ENCODE measurements at regions of chr7 and their contacts with region 1.

Region 1: DNA sequence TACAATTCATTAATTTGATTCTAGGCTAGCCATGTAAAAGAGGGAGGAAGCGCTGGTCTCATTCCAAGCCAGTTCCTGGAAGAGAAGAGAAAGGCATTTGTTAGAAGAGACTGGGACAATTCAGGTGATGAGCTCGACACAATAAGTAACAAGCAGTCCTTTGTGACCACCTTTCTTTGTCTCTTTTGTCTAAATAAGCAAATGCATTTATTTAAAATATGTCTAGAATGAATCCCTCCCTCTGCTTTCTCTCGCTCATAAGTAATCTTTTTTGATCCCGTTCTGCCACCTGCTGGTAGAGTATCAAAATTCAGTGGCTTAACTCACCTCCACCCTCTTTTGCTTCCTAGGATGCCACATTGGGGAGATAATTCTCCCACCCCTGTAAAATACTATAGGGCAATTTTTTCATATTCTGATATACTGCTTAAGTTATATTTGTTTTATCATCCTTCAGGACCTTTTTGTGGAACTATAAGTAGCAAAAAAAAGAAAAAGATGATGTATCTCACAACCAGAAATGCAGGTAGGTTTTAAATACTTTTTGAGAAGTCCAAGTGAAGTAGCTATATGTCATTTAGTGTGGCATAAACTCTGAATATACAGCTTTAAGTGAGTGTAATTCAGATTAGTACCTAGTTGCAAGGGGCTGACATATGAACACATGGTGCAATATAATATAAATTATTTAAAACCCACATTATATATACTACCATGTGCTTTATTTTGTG is 91.5 kb downstream of the GSDME start:
- DNase-seq: peak; percentile 71
- ATAC-seq: peak; percentile 45
- H3K4me3 ChIP-seq: no peak overlapping the region
- H3K27ac ChIP-seq: no peak overlapping the region
- H3K4me1 ChIP-seq: peaks cover 21% of the 10 kb centered on the region
- H3K27me3 ChIP-seq: no peaks in the 10 kb centered on the region
- CTCF ChIP-seq: peak; percentile 79

Region 2: DNA sequence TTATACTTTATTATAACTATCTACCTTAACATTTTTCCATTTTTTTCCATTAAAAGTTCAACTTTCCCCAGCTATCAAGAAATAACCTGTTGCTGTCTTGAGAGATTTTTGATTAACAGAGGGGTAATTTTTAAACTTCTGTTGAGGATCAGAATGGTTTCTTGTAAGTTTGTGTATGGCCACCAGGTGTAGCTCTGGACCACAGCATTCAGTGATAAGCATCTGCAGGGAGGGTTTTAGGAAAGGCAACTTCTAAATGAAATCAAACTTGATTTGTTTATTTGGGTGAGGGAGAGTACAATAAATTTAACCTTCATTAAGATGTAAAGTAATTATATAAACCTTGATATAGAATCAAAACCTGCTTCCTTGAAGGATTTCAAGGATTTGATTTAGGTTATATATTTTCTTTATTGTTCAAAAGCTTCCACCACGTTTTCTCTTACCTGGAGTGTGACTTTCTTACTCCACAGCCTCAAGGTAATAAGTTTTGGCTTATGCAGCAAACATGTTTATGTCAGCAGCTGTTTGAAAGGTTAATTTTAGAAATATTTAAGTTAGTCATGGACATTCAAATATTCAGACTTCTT is 802.4 kb before region 1 on chr7:
- CTCF ChIA-PET with region 1: no interaction called
- POLR2A ChIA-PET with region 1: no interaction called
- intact Hi-C with region 1: loop called (anchors 5 kb)
- DNase-seq: peak; percentile 63
- ATAC-seq: peak; percentile 74
- H3K4me3 ChIP-seq: no peak overlapping the region
- H3K27ac ChIP-seq: no peak overlapping the region
- H3K4me1 ChIP-seq: peaks cover 9% of the 10 kb centered on the region; the same call in 1 of the 2 replicates
- H3K27me3 ChIP-seq: no peaks in the 10 kb centered on the region
- CTCF ChIP-seq: peak; percentile 80

Region 3: DNA sequence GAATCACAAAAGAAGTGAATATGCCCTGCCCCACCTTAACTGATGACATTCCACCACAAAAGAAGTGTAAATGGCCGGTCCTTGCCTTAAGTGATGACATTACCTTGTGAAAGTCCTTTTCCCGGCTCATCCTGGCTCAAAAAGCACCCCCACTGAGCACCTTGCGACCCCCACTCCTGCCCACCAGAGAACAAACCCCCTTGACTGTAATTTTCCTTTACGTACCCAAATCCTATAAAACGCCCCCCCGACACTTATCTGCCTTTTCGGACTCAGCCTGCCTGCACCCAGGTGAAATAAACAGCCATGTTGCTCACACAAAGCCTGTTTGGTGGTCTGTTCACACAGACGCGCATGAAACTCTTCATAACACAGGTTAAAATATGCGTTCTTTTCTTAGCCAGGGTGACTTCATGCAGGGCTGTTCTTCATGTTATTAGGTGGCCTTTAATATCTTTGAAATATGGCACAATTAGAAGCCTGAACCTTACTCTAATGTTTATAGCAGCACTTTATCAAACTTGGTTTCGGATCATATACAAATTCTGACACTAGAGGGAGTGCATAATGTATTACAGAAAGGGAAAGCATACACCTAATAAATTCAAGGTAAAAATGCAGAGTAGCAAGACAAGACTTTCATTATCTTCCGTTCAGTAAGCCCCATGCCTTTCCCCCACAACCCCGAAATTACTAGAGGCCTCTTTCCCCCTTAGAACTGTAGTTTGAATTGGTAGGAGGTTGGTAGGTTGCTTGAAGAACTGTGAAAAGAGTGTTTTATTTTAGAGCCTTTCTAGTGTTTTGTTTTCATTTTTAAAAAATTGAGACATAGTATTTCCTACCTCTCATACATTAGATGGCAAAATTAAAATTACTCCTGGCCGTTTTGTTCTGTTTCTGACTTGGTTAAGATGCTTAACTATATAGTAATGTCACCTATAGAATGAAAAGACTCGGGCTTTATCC is 263.8 kb before region 1 on chr7:
- CTCF ChIA-PET with region 1: interaction called, 6 read pairs
- POLR2A ChIA-PET with region 1: no interaction called
- intact Hi-C with region 1: loop called (anchors 1 kb)
- DNase-seq: peak; percentile 65
- ATAC-seq: peak; percentile 87
- H3K4me3 ChIP-seq: peak overlapping the region; percentile 61
- H3K27ac ChIP-seq: no peak overlapping the region
- H3K4me1 ChIP-seq: 0 out of 2 replicates have a peak, but pooled peaks cover 5% of the 10 kb centered on the region
- H3K27me3 ChIP-seq: peaks cover 9% of the 10 kb centered on the region; the same call in 1 of the 2 replicates
- CTCF ChIP-seq: peak; percentile 68

Region 4: DNA sequence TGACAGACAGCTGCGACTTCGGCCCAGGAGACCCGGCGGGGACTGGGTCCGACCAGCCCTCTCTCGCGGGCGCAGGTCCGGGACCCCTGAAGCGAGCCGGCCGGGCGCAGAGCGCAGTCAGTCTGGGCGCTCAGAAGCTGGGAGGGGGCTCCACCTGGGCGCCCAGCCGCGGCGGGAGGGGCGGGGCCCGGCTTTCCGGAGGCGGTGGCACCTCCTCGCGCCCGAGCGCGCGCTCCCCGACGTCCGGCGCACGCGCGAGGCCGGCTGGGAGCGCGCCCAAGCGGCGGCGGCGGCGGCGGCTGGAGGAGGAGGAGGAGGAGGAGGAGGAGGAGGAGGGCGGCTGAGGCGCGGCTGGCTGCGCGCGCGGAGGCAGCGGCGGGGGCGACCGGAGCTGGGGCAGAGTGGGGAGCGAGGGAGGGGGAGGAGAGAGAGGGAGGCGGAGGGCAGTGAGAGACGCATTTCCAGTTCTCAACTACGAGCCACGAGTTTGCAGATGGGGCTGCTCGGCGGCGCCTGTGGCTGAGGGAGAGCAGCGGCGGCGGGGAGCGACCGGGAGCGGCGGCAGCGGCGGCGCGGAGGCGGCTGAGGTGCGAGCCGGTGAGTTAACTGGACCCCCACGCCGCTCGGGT is 92.6 kb before region 1 on chr7 and contains the start of gene PALS2:
- CTCF ChIA-PET with region 1: no interaction called
- POLR2A ChIA-PET with region 1: no interaction called
- intact Hi-C with region 1: loop called (anchors 1 kb)
- DNase-seq: peak; percentile 77
- ATAC-seq: peak; percentile 45
- H3K4me3 ChIP-seq: peak within 1 kb of the TSS; percentile 97
- H3K27ac ChIP-seq: peak within 1 kb of the TSS; percentile 64
- H3K4me1 ChIP-seq: peaks cover 18% of the 10 kb centered on the region
- H3K27me3 ChIP-seq: peaks cover 26% of the 10 kb centered on the region
- CTCF ChIP-seq: no peak
- total RNA-seq, gene PALS2: 10.8 and 15.3 TPM in 2 replicates

Measured in PC-3 (cell line).